Tibial artery (tissue), 4 donors: ENCODE measurements at regions of chr4 and their contacts with region 1.

Region 1: DNA sequence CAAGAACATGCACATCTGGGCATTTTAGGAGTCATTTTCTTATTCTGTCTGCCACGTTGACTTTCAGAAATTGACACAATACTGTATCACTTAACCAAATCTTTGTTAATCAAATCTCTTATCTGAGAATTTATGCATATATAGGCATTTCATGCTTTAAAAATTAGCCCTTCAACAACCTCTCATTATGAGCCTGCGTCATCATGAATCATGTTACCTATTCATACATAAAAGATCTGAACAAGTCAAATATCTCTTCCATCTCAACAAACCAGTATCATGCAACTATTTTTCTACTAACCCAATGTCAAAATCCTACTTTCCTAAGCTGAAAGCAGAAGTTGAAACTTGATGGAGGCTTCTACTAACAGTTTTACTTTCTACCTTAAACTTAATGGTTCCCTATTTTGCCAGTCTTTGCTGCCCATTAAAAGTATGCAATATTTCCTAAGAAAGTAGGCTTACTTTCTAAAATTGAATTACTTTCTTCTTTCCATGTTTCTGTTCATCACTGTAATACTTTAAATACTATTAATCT is 1.8 kb downstream of the ADAM29 start:
- DNase-seq: no peak
- H3K4me3 ChIP-seq: no peak overlapping the region
- H3K27ac ChIP-seq: no peak overlapping the region
- H3K4me1 ChIP-seq: no peaks in the 10 kb centered on the region
- H3K27me3 ChIP-seq: no peaks in the 10 kb centered on the region
- CTCF ChIP-seq: no peak

Region 2: DNA sequence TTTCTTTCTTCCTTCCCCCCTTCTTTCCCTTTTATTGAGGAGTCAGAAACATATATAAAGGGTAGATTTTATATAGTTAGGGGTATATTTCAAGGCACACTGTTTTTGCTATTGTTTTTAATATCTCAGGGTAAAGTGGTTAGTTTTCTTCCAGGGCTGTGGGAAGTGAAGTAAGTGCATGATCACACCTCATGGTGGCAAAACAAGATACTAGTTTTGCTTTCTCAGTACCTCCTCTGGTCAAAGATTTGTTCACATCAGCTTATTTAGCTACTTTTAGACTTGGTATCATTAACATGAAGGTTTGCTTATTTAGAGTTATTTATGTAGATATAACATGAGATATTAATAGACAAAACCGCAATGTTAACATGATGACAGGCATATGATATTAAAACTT is 20.0 kb after region 1 on chr4:
- intact Hi-C with region 1: loop called (anchors 1 kb)
- DNase-seq: no peak
- H3K4me3 ChIP-seq: no peak overlapping the region
- H3K27ac ChIP-seq: no peak overlapping the region
- H3K4me1 ChIP-seq: no peaks in the 10 kb centered on the region
- H3K27me3 ChIP-seq: no peaks in the 10 kb centered on the region
- CTCF ChIP-seq: no peak